ENCODE measurements at regions of chr13 and their contacts with region 1.

Region 1: DNA sequence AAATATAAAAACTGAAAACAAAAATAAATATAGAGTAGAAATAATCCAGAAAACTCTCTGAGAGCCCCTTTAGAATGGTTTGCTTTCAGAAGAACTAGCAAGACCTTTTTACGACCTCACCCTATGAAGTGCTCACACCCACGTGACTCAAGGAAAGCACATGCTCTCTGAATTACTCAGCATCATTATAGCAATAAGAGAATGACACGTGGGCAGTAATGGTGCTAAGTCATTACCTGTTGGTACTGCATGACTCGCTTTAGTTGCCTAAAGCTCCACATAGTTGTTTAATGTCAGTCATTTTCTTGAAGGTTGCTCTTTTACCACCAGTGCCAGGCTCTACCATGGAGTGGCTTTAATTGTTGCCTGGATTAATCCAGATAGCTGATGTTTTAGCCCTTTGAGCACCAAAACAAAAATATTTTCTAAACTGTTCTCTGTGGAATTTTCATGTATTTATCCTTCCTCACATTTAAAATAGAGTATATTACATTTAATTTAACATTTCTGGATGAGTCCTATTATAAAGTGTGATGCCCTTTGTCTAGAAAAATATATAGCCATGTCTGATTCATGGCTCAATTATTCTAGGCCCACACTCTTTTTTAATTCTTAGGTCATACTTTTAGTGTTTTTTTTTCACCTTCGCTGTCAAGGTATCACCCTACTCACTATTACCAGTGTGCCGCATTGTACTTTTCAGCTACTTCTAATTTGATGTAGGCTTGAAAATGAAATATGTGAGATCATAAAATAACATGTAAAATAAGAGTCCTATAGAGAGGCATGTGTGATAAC is 56.8 kb downstream of the THSD1 start:
- DNase-seq: peak; percentile 85
- ATAC-seq: no peak
- H3K4me3 ChIP-seq: no peak overlapping the region
- H3K27ac ChIP-seq: no peak overlapping the region
- H3K4me1 ChIP-seq: peaks cover 2% of the 10 kb centered on the region
- H3K27me3 ChIP-seq: no peaks in the 10 kb centered on the region
- CTCF ChIP-seq: no peak
- POLR2A ChIP-seq: no peak
- RAD21 ChIP-seq: no peak

Region 2: DNA sequence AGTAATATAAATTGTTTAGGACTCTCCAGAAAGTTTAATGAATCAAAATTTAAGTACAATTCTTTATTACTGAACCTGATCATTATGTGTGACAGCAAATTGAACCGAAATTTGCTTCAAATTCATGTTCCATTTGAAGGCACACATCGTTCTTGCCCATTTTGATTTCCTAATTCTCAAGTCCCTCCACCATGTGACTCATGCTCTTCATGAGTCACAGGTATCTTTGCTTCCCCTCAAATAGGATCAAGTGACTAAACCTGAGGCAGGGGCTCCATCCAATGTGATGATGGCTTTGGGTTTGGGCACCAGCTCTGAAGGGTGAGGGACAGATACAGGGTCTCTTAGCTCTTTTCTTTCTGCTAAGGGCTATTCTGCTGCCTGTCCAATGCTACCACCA is 29.3 kb before region 1 on chr13:
- CTCF ChIA-PET with region 1: no interaction called
- POLR2A ChIA-PET with region 1: no interaction called
- dilution Hi-C with region 1: no loop called
- in situ Hi-C with region 1: no loop called
- intact Hi-C with region 1: no loop called
- DNase-seq: peak; percentile 4
- ATAC-seq: no peak
- H3K4me3 ChIP-seq: no peak overlapping the region
- H3K27ac ChIP-seq: no peak overlapping the region
- H3K4me1 ChIP-seq: no peaks in the 10 kb centered on the region
- H3K27me3 ChIP-seq: peaks cover 10% of the 10 kb centered on the region; the same call in 1 of the 2 replicates
- CTCF ChIP-seq: no peak
- POLR2A ChIP-seq: no peak
- RAD21 ChIP-seq: no peak

Region 3: GRCh38 chr13:52414963-52415362 is 65.8 kb after region 1 on chr13:
- CTCF ChIA-PET with region 1: no interaction called
- POLR2A ChIA-PET with region 1: no interaction called
- dilution Hi-C with region 1: no loop called
- in situ Hi-C with region 1: no loop called
- intact Hi-C with region 1: loop called (anchors 5 kb)
- DNase-seq: peak; percentile 69
- ATAC-seq: peak; percentile 80
- H3K4me3 ChIP-seq: no peak overlapping the region
- H3K27ac ChIP-seq: peak overlapping the region; percentile 89; the same call in 1 of the 2 replicates
- H3K4me1 ChIP-seq: peaks cover 16% of the 10 kb centered on the region
- H3K27me3 ChIP-seq: no peaks in the 10 kb centered on the region
- CTCF ChIP-seq: no peak
- POLR2A ChIP-seq: no peak
- RAD21 ChIP-seq: no peak

Region 4: GRCh38 chr13:52428295-52428694 is 79.1 kb after region 1 on chr13:
- CTCF ChIA-PET with region 1: no interaction called
- POLR2A ChIA-PET with region 1: no interaction called
- dilution Hi-C with region 1: no loop called
- in situ Hi-C with region 1: no loop called
- intact Hi-C with region 1: no loop called
- DNase-seq: peak; percentile 70
- ATAC-seq: peak; percentile 42; the same call in 1 of the 2 replicates
- H3K4me3 ChIP-seq: no peak overlapping the region
- H3K27ac ChIP-seq: no peak overlapping the region
- H3K4me1 ChIP-seq: peaks cover 3% of the 10 kb centered on the region; the same call in 1 of the 2 replicates
- H3K27me3 ChIP-seq: no peaks in the 10 kb centered on the region
- CTCF ChIP-seq: no peak
- POLR2A ChIP-seq: no peak
- RAD21 ChIP-seq: no peak

Region 5: DNA sequence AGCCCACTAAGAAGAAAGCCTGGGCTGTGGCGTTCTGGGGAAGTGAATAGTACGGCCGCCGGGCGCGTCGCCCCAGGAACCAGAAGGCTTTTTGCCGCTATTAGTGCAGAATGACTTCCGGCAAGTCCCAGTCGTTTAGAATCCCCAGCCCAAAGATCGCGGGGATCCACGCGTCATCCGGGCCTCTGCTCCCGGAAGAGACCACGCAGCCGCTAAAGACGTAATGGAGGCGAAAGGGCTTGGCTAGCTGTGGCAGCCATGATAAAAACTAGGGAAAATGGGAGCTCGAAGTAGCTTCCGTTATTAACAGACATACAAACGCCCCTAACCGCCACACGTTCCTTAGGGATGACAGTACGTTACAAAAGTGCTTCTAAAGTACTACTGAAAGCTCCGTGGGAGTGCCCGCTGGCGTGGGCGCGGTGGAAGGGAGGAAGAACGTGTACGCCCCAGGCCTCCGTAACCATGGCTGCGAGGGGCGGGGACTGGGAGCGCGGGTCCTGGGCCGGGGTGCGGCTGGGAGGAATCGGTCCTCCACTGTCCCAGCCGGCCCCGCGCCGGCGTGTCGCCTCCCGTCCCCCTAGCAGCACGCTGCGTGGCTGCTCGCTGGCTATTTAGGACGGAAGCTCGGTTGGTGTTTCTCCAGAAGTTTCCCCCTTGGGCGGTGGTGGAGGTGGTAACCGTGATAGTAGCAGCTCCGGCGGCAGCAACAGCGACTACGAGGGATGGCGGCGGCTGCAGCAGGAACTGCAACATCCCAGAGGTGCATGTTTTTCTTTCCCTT is 303.2 kb after region 1 on chr13 and contains the start of gene SUGT1:
- CTCF ChIA-PET with region 1: no interaction called
- POLR2A ChIA-PET with region 1: interaction called, 10 read pairs
- dilution Hi-C with region 1: no loop called
- in situ Hi-C with region 1: no loop called
- intact Hi-C with region 1: no loop called
- DNase-seq: peak; percentile 97
- ATAC-seq: peak; percentile 97
- H3K4me3 ChIP-seq: peak within 1 kb of the TSS; percentile 93
- H3K27ac ChIP-seq: peak within 1 kb of the TSS; percentile 96
- H3K4me1 ChIP-seq: peaks cover 2% of the 10 kb centered on the region; the same call in 1 of the 2 replicates
- H3K27me3 ChIP-seq: no peaks in the 10 kb centered on the region
- CTCF ChIP-seq: peak; percentile 68
- POLR2A ChIP-seq: peak; percentile 91
- RAD21 ChIP-seq: peak; percentile 42
- total RNA-seq, gene SUGT1: 21.5 and 41.4 TPM in 2 replicates